HEK293 (cell line): ENCODE measurements at regions of chr5 and their contacts with region 1.

Region 1: DNA sequence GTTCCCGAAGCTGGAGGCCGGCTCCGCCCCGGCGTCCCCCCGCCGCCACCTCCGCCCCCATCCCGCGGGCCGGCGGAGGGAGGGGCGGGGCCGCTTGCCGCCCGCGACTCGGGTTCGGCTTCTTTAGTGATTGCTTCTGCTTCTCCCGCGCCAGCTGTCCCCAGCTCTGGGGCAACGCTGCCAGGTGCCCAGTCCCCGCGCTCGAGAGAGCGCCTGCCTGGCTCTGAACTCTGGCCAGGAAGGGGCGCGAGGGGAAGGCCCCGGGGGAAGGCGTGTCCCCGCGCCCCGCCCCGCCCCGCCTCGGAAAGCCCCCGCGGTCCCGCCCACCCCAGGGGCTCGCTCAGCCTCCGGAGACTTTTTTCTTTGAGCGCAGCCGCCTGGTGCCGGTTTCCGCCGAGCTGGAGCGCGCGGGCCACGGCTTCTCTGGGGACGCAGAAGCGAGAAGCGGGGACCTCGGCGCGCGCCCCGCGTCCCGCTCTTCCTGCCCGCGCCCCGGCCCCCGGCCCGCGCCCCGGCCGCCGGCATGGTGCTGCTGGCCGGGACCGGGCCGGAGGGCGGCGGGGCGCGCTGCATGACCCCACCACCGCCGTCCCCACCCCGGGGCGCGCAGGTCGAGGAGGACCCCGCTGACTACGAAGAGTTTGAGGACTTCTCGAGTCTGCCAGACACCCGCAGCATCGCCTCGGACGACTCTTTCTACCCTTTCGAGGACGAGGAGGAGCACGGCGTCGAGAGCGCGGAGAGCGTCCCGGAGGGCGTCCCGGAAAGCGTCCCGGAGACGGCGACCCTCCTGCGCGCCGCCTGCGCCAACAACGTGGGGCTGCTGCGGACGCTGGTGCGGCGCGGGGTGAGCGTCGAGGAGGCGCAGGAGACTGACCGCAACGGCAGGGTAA is at the start of gene ANKRD33B:
- H3K4me3 ChIP-seq: peak within 1 kb of the TSS; percentile 71
- H3K27ac ChIP-seq: peak within 1 kb of the TSS; percentile 88
- H3K4me1 ChIP-seq: peaks cover 16% of the 10 kb centered on the region
- CTCF ChIP-seq: no peak

Region 2: GRCh38 chr5:10387690-10388089 is 176.5 kb before region 1 on chr5:
- CTCF ChIA-PET with region 1: no interaction called
- POLR2A ChIA-PET with region 1: no interaction called
- H3K4me3 ChIP-seq: no peak overlapping the region
- H3K27ac ChIP-seq: no peak overlapping the region
- H3K4me1 ChIP-seq: no peaks in the 10 kb centered on the region
- CTCF ChIP-seq: no peak

Region 3: GRCh38 chr5:10552183-10553143 is 11.7 kb before region 1 on chr5:
- CTCF ChIA-PET with region 1: interaction called, 5 read pairs
- POLR2A ChIA-PET with region 1: interaction called, 20 read pairs
- H3K4me3 ChIP-seq: no peak overlapping the region
- H3K27ac ChIP-seq: no peak overlapping the region
- H3K4me1 ChIP-seq: peaks cover 19% of the 10 kb centered on the region
- CTCF ChIP-seq: no peak

Region 4: DNA sequence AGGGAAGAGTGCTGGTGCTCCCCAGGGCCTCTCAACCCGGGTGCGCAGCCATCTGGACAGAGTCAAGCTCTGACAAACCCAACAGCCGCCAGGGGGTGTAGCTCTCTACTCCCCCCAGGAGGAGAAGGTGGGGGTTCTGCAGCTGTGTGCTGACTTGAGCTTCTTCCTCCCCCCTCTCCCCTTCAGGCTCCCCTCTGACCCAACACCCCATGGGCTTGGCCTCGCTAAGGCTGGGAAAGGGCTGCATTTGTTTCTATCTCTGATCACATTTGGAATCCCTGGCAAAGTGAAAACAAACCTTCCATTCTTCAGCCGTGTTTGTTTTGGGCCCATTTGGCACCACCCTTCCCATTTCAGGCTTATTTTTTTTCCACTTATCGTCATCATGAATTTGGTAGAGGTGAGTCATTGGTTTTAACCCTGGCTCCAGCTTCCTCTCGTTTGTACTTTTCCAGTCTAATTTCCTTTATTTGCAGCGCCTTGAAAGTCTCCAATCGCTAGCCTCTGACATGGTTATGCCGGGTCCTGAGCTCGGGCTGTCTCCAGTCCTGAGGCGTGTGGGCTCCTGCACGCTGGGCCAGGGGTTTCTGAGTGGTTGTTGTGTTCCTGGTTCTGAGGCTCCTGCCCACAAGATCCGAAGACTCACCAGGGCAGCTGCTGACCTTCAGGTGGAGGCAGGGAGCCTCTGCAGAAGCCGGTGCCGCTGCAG is 160.8 kb after region 1 on chr5:
- CTCF ChIA-PET with region 1: no interaction called
- POLR2A ChIA-PET with region 1: no interaction called
- H3K4me3 ChIP-seq: no peak overlapping the region
- H3K27ac ChIP-seq: no peak overlapping the region
- H3K4me1 ChIP-seq: no peaks in the 10 kb centered on the region
- CTCF ChIP-seq: no peak